ENCODE measurements at regions of chr5 and their contacts with region 1.

Region 1: GRCh38 chr5:59799668-59800346 is 93.7 kb downstream of the PDE4D start:
- DNase-seq: peak; percentile 76
- ATAC-seq: peak; percentile 50
- H3K4me3 ChIP-seq: peak overlapping the region in 3 of 5 experiments; percentile 6 to 54 (median 28)
- H3K4me3 Mint-ChIP-seq: no peak overlapping the region
- H3K27ac ChIP-seq: peak overlapping the region; percentile 55 to 74
- H3K27ac Mint-ChIP-seq: no peak overlapping the region
- H3K4me1 ChIP-seq: peaks cover 26 to 30% of the 10 kb centered on the region in 2 donors
- H3K4me1 Mint-ChIP-seq: peaks cover 14% of the 10 kb centered on the region
- H3K27me3 ChIP-seq: no peaks in the 10 kb centered on the region
- H3K27me3 Mint-ChIP-seq: no peaks in the 10 kb centered on the region
- CTCF ChIP-seq: peak; percentile 94

Region 2: DNA sequence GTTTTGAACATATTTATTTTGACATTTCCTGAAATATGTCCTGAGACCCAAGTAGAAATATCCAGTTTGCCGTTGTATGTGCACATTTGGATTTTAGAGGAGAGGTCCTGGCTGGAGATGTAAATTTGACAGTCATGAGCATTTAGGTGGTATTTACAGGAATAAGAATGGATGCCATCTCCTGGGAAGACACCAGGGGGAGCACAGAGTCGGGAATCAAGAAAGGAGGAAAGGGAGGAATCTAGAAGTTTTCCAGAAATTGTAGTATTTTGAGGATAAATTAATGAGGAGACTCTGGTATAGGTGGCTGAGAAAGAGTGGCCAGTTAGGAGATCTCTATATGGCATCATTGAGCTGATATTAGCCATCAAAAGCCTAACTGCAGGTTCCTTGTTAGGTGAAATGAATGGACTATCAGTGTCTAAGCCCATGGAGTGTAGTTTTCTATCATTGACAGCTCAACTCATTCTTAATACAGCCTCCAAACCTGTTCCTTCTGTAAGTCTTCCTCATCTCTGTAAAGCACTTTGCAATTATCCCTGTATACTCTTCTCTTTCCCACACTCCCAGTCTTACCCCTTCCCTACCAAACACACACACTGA is 1301.4 kb before region 1 on chr5:
- CTCF ChIA-PET with region 1: no interaction called
- POLR2A ChIA-PET with region 1: no interaction called
- intact Hi-C with region 1: loop called (anchors 10 kb)
- DNase-seq: no peak
- ATAC-seq: no peak
- H3K4me3 ChIP-seq: no peak overlapping the region
- H3K4me3 Mint-ChIP-seq: peak overlapping the region; percentile 76
- H3K27ac ChIP-seq: peak overlapping the region; percentile 70 to 75
- H3K27ac Mint-ChIP-seq: peak overlapping the region; percentile 88
- H3K4me1 ChIP-seq: peaks cover 79 to 91% of the 10 kb centered on the region in 2 donors
- H3K4me1 Mint-ChIP-seq: peaks cover 92% of the 10 kb centered on the region
- H3K27me3 ChIP-seq: no peaks in the 10 kb centered on the region
- H3K27me3 Mint-ChIP-seq: no peaks in the 10 kb centered on the region
- CTCF ChIP-seq: no peak

Region 3: GRCh38 chr5:59039296-59040023 is 760.3 kb before region 1 on chr5:
- CTCF ChIA-PET with region 1: no interaction called
- POLR2A ChIA-PET with region 1: no interaction called
- intact Hi-C with region 1: loop called (anchors 10 kb)
- DNase-seq: peak; percentile 68
- ATAC-seq: peak; percentile 75
- H3K4me3 ChIP-seq: peak overlapping the region; percentile 31 to 66 (median 53)
- H3K4me3 Mint-ChIP-seq: peak overlapping the region; percentile 96
- H3K27ac ChIP-seq: no peak overlapping the region
- H3K27ac Mint-ChIP-seq: peak overlapping the region; percentile 93
- H3K4me1 ChIP-seq: peaks cover 20% of the 10 kb centered on the region in 2 donors
- H3K4me1 Mint-ChIP-seq: peaks cover 30% of the 10 kb centered on the region
- H3K27me3 ChIP-seq: peaks cover 0 to 27% (median 13%) of the 10 kb centered on the region in 4 experiments
- H3K27me3 Mint-ChIP-seq: peaks cover 28% of the 10 kb centered on the region
- CTCF ChIP-seq: no peak

Region 4: GRCh38 chr5:59380350-59380951 is 419.4 kb before region 1 on chr5:
- CTCF ChIA-PET with region 1: interaction called, 24 read pairs
- POLR2A ChIA-PET with region 1: no interaction called
- intact Hi-C with region 1: loop called (anchors 2 kb)
- DNase-seq: peak; percentile 64
- ATAC-seq: peak; percentile 85
- H3K4me3 ChIP-seq: no peak overlapping the region
- H3K4me3 Mint-ChIP-seq: no peak overlapping the region
- H3K27ac ChIP-seq: no peak overlapping the region
- H3K27ac Mint-ChIP-seq: no peak overlapping the region
- H3K4me1 ChIP-seq: no peaks in the 10 kb centered on the region
- H3K4me1 Mint-ChIP-seq: peaks cover 5% of the 10 kb centered on the region
- H3K27me3 ChIP-seq: no peaks in the 10 kb centered on the region
- H3K27me3 Mint-ChIP-seq: no peaks in the 10 kb centered on the region
- CTCF ChIP-seq: peak; percentile 72

Region 5: DNA sequence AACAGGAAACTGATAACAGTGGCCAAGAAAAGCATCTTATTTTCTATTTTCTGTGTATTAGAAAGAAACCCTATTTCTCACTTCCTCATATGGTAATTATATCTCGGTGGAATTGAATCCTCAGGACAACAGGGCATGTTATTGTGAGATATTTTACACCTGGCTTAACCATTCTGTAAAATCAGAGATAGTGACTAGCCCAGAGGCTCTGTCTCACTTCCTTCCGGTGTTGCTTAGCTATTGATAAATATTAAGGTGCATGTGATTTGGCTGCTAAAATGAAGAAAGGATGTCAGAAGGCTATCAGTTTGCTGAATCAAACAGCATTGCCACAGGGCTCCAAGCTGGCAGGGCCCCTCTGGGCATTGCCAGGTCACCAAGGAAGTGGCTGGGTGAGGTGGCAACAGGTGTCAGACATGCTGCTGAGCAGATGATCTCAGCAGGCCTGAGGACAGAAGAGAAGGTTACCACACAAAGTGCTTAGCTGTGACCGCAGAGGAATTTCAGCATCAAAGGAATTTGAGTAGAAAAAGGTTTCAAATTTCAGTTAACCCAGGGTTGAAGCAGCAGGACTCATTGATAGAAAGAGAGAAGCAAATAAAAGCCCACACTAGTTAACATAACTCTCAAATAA is 236.9 kb before region 1 on chr5:
- CTCF ChIA-PET with region 1: interaction called, 3 read pairs
- POLR2A ChIA-PET with region 1: no interaction called
- intact Hi-C with region 1: loop called (anchors 1 kb)
- DNase-seq: peak; percentile 91
- ATAC-seq: peak; percentile 89
- H3K4me3 ChIP-seq: peak overlapping the region in 2 of 5 experiments; percentile 8 to 16
- H3K4me3 Mint-ChIP-seq: peak overlapping the region; percentile 68
- H3K27ac ChIP-seq: peak overlapping the region; percentile 97
- H3K27ac Mint-ChIP-seq: peak overlapping the region; percentile 96
- H3K4me1 ChIP-seq: peaks cover 56 to 57% of the 10 kb centered on the region in 2 donors
- H3K4me1 Mint-ChIP-seq: peaks cover 64% of the 10 kb centered on the region
- H3K27me3 ChIP-seq: no peaks in the 10 kb centered on the region
- H3K27me3 Mint-ChIP-seq: no peaks in the 10 kb centered on the region
- CTCF ChIP-seq: no peak

Region 6: DNA sequence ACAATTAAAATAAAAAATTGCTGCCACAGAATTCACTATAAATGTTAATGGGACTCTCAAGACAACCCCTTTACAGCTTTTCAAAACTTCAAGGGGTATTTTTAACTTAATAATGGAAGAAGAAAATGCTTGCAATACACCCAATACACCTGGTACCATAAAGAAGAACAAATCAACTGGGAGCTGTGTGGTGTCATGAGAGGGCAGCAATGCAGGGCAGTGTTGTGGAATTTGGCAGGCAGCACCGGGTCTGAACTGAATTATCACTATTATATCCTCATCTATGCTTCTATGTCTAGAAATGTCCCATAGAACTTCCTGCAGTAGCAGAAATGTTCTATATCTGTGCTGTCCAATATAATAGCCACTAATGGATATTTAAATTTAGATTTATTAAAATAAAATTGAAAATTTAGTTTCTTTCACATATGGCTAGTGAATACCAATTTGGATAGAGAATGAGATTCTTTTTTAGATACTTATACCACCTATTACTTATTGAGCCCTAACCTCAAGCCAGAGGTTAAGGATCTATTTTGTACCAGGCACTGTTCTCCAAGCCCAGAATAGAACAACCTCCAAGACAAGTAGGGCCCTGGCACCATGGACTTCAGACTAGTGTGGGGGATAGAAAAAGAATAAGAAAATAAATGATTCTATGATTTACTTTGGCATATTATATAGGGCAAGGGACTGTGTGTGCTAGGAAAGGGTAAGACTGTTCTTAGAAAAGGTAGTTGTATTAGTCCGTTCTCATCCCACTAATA is 171.6 kb before region 1 on chr5:
- CTCF ChIA-PET with region 1: no interaction called
- POLR2A ChIA-PET with region 1: no interaction called
- intact Hi-C with region 1: no loop called
- DNase-seq: no peak
- ATAC-seq: no peak
- H3K4me3 ChIP-seq: no peak overlapping the region
- H3K4me3 Mint-ChIP-seq: no peak overlapping the region
- H3K27ac ChIP-seq: no peak overlapping the region
- H3K27ac Mint-ChIP-seq: no peak overlapping the region
- H3K4me1 ChIP-seq: no peaks in the 10 kb centered on the region
- H3K4me1 Mint-ChIP-seq: peaks cover 8% of the 10 kb centered on the region
- H3K27me3 ChIP-seq: no peaks in the 10 kb centered on the region
- H3K27me3 Mint-ChIP-seq: no peaks in the 10 kb centered on the region
- CTCF ChIP-seq: no peak

Region 7: DNA sequence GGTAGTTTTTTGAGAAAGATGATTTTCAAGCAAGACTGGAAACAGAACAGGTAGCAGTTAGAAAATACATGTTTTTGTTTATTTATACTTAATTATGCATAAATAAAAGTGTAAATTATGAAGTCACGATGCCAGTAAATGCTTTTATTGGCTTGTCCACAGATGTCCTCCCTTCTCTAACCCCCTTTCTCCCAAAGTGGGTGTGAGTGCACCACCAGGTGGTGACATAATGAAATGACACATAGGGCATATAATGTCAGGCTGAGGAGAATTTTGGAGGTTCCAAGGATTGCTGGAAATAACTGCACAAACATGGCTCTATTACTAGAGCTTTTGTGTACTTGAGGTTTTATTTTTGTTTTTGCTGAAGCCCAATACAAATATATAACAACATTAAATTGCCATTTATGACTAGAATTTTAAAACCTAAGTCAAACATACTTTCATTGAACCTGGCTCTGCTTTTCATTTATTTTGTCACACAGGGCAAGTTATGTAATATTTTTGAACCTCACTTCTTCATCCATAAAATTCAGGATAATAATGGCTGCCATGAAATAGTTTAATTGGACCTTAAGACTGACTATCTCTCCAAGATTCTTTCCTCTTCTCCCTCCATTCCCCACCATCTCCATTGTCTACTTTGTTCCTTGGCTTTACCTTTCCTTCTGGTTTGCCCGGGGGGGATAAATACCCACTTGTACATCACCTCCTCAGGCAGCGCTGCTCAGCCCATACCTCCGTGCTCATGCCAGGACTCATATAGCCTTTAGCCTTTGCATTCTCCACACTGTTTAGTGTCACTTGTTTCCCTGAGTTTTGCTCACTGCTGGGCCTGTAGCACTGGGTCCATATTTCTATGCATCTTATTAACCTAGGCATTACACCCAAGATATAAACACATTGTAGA is 75.1 kb before region 1 on chr5:
- CTCF ChIA-PET with region 1: interaction called, 10 read pairs
- POLR2A ChIA-PET with region 1: interaction called, 6 read pairs
- intact Hi-C with region 1: loop called (anchors 1 kb)
- DNase-seq: peak; percentile 59
- ATAC-seq: peak; percentile 64
- H3K4me3 ChIP-seq: no peak overlapping the region
- H3K4me3 Mint-ChIP-seq: no peak overlapping the region
- H3K27ac ChIP-seq: no peak overlapping the region
- H3K27ac Mint-ChIP-seq: no peak overlapping the region
- H3K4me1 ChIP-seq: no peaks in the 10 kb centered on the region
- H3K4me1 Mint-ChIP-seq: peaks cover 19% of the 10 kb centered on the region
- H3K27me3 ChIP-seq: no peaks in the 10 kb centered on the region
- H3K27me3 Mint-ChIP-seq: no peaks in the 10 kb centered on the region
- CTCF ChIP-seq: peak; percentile 79

Region 8: GRCh38 chr5:59999056-59999455 is 199.2 kb after region 1 on chr5:
- CTCF ChIA-PET with region 1: no interaction called
- POLR2A ChIA-PET with region 1: no interaction called
- intact Hi-C with region 1: no loop called
- DNase-seq: no peak
- ATAC-seq: no peak
- H3K4me3 ChIP-seq: no peak overlapping the region
- H3K4me3 Mint-ChIP-seq: no peak overlapping the region
- H3K27ac ChIP-seq: no peak overlapping the region
- H3K27ac Mint-ChIP-seq: no peak overlapping the region
- H3K4me1 ChIP-seq: no peaks in the 10 kb centered on the region
- H3K4me1 Mint-ChIP-seq: no peaks in the 10 kb centered on the region
- H3K27me3 ChIP-seq: no peaks in the 10 kb centered on the region
- H3K27me3 Mint-ChIP-seq: no peaks in the 10 kb centered on the region
- CTCF ChIP-seq: no peak

Region 9: DNA sequence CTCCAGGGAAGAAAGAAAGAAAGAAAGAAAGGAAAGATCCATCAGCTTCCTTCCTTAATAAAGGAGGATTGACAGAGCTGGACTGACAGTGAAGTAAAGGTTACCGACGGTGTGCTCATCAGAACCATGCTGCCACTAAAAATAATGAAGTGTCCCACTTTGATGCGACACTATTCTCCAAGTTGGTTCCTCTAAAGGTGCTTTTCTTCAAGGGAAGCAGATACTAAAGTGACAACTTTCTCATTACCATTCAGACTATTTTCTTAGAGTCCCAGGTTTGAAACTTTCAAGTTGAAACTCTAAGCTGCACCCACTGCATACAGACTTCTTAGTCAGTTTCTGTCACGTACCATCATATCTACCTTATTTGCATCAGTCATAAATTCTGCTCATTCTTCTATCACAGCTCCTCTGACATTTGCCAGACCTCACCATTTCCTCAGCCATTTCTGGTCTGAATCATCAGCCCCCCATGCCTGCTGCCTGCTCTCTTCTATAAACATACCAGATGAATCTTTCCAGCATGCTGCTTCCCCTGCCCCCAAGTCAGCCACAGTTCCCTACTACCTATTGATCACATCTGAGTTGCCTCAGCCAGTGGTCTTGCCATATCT is 722.6 kb after region 1 on chr5:
- CTCF ChIA-PET with region 1: no interaction called
- POLR2A ChIA-PET with region 1: no interaction called
- intact Hi-C with region 1: loop called (anchors 10 kb)
- DNase-seq: peak; percentile 43
- ATAC-seq: peak; percentile 59
- H3K4me3 ChIP-seq: peak overlapping the region; percentile 39 to 65 (median 58)
- H3K4me3 Mint-ChIP-seq: no peak overlapping the region
- H3K27ac ChIP-seq: peak overlapping the region; percentile 88
- H3K27ac Mint-ChIP-seq: no peak overlapping the region
- H3K4me1 ChIP-seq: peaks cover 45 to 56% of the 10 kb centered on the region in 2 donors
- H3K4me1 Mint-ChIP-seq: peaks cover 37% of the 10 kb centered on the region
- H3K27me3 ChIP-seq: no peaks in the 10 kb centered on the region
- H3K27me3 Mint-ChIP-seq: no peaks in the 10 kb centered on the region
- CTCF ChIP-seq: no peak

Measured in B cell (primary cell).